Activated CD4-positive, alpha-beta memory T cell treated with anti-CD3 and anti-CD28 coated beads for 36 hours (primary cell): ENCODE measurements at regions of chr7 and their contacts with region 1.

Region 1: GRCh38 chr7:128135515-128136214 is 104.4 kb upstream of the LRRC4 start:
- DNase-seq: peak; percentile 75
- H3K4me3 Mint-ChIP-seq: peak overlapping the region; percentile 62
- H3K27ac Mint-ChIP-seq: no peak overlapping the region
- H3K4me1 Mint-ChIP-seq: peaks cover 12% of the 10 kb centered on the region
- H3K27me3 Mint-ChIP-seq: peaks cover 31% of the 10 kb centered on the region

Region 2: GRCh38 chr7:127708788-127709187 is 426.9 kb before region 1 on chr7:
- CTCF ChIA-PET with region 1: interaction called, 11 read pairs
- POLR2A ChIA-PET with region 1: no interaction called
- intact Hi-C with region 1: loop called (anchors 5 kb)
- DNase-seq: peak; percentile 74
- H3K4me3 Mint-ChIP-seq: no peak overlapping the region
- H3K27ac Mint-ChIP-seq: no peak overlapping the region
- H3K4me1 Mint-ChIP-seq: peaks cover 5% of the 10 kb centered on the region
- H3K27me3 Mint-ChIP-seq: no peaks in the 10 kb centered on the region

Region 3: DNA sequence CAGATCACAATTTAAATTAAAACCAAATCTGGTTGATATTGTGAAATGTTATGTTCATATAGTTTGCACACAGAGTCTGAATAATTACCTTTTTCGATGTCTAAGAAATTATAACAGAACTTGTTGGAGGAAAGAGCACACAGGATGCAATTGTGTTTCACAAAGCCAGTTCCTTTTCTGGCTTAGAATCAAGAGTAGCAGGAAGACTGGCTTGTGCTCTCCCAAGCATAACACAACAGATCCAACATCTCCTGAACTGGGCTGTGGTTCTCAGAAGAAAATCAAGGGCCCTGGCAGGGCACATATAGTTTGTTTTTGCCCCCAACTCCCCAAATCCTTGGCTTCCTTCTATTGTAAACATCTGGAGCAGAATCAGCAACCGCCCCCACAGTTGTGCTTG is 167.1 kb before region 1 on chr7:
- CTCF ChIA-PET with region 1: no interaction called
- POLR2A ChIA-PET with region 1: no interaction called
- intact Hi-C with region 1: no loop called
- DNase-seq: no peak
- H3K4me3 Mint-ChIP-seq: no peak overlapping the region
- H3K27ac Mint-ChIP-seq: no peak overlapping the region
- H3K4me1 Mint-ChIP-seq: no peaks in the 10 kb centered on the region
- H3K27me3 Mint-ChIP-seq: no peaks in the 10 kb centered on the region

Region 4: DNA sequence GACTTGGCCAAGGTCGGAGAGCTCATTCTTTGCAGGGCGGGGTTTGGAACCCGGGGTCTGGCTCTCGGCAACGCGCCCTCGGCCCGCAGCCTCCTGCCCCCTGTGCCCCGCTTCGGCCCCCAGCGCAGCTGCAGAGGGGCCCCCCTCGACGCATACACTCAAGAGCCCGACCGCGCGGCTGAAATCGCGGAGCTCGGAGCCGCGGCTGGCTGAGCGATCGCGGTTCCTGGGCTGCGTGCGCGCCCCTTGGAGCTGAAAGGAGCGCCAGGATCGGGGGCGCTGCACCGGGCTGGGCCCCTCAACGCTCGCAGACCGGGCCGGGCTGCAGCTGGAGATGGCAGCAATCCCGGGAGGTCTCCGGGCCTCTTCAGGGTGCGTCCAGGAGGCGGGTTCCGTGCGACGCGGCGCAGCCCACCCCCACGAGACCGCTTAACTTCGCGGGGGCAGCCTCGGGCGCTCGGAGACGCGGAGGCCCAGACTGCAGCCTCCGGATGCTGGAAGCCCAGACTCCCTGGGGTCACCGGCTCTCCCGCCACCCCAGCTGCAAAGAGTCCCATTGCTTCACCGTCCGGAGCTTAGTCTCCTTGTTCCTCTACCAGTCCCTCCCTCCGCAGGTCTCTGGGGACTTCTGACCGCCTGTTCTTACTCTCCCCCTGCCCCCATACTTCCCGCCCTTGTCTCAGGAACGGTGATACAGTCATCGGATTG is 31.5 kb before region 1 on chr7:
- CTCF ChIA-PET with region 1: interaction called, 15 read pairs
- POLR2A ChIA-PET with region 1: interaction called, 3 read pairs
- intact Hi-C with region 1: no loop called
- DNase-seq: peak; percentile 23
- H3K4me3 Mint-ChIP-seq: peak overlapping the region; percentile 75
- H3K27ac Mint-ChIP-seq: no peak overlapping the region
- H3K4me1 Mint-ChIP-seq: peaks cover 38% of the 10 kb centered on the region
- H3K27me3 Mint-ChIP-seq: peaks cover 3% of the 10 kb centered on the region

Region 5: GRCh38 chr7:128155100-128155740 is 19.6 kb after region 1 on chr7:
- CTCF ChIA-PET with region 1: interaction called, 10 read pairs
- POLR2A ChIA-PET with region 1: no interaction called
- intact Hi-C with region 1: no loop called
- DNase-seq: no peak
- H3K4me3 Mint-ChIP-seq: no peak overlapping the region
- H3K27ac Mint-ChIP-seq: no peak overlapping the region
- H3K4me1 Mint-ChIP-seq: no peaks in the 10 kb centered on the region
- H3K27me3 Mint-ChIP-seq: peaks cover 11% of the 10 kb centered on the region

Region 6: GRCh38 chr7:128197589-128197988 is 61.9 kb after region 1 on chr7:
- CTCF ChIA-PET with region 1: interaction called, 11 read pairs
- POLR2A ChIA-PET with region 1: no interaction called
- intact Hi-C with region 1: no loop called
- DNase-seq: peak; percentile 2
- H3K4me3 Mint-ChIP-seq: no peak overlapping the region
- H3K27ac Mint-ChIP-seq: no peak overlapping the region
- H3K4me1 Mint-ChIP-seq: peaks cover 12% of the 10 kb centered on the region
- H3K27me3 Mint-ChIP-seq: peaks cover 23% of the 10 kb centered on the region